Heart left ventricle (tissue), 16 donors: ENCODE measurements at regions of chr7 and their contacts with region 1.

Region 1: GRCh38 chr7:107972075-107972482 is 30.9 kb downstream of the LAMB1 start:
- DNase-seq: peak in 2 of 5 donors; percentile 38 to 62
- ATAC-seq: peak; percentile 78 to 90 (median 85)
- H3K4me3 ChIP-seq: no peak overlapping the region
- H3K27ac ChIP-seq: peak overlapping the region; percentile 37 to 92 (median 72)
- H3K4me1 ChIP-seq: peaks cover 0 to 74% (median 52%) of the 10 kb centered on the region in 12 donors
- H3K27me3 ChIP-seq: no peaks in the 10 kb centered on the region
- CTCF ChIP-seq: no peak
- POLR2A ChIP-seq: no peak

Region 2: GRCh38 chr7:107907790-107908189 is 64.3 kb before region 1 on chr7:
- intact Hi-C with region 1: no loop called
- DNase-seq: no peak
- ATAC-seq: peak in 3 of 4 donors; percentile 24 to 68 (median 61)
- H3K4me3 ChIP-seq: no peak overlapping the region
- H3K27ac ChIP-seq: peak overlapping the region in 2 of 12 donors; percentile 2 to 39
- H3K4me1 ChIP-seq: peaks cover 0 to 26% (median 8%) of the 10 kb centered on the region in 12 donors
- H3K27me3 ChIP-seq: no peaks in the 10 kb centered on the region
- CTCF ChIP-seq: no peak
- POLR2A ChIP-seq: no peak

Region 3: DNA sequence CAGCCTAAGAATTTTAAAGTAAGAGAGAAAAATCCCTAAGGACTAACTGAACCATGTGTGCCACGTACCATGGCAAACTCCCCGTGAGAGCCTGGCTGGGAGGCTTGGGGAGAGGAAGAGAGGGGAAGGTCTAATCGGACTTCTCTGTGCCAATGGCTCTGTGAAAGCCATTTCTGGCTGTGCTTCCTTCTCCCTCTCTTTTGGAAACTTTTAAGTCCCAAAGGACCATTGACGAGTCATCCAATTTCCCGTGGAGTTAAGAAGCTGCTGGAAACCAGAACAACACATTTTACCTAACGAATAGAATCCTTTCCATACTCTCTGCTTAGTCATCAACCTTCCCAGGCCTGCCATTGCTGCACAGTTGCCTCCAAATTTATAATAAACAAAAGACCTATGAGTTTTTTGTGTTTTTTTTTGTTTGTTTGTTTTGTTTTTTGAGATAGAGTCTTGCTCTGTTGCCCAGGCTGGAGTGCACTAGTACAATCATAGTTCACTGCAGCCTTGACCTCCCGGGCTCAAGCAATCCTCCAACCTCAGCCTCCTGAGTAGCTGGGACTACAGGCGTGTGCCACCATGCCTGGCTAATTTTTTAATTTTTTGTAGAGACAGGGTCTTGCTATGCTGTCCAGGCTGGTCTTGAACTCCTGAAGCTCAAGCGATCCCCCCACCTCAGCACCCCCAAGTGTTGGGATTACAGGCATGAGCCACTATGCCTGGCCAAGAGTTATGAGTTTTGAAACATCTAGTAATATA is 17.7 kb after region 1 on chr7:
- intact Hi-C with region 1: loop called in 2 of 10 experiments (anchors 2 kb)
- DNase-seq: peak in 3 of 5 donors; percentile 40 to 54 (median 40)
- ATAC-seq: peak; percentile 49 to 77 (median 74)
- H3K4me3 ChIP-seq: no peak overlapping the region
- H3K27ac ChIP-seq: peak overlapping the region; percentile 39 to 77 (median 51)
- H3K4me1 ChIP-seq: peaks cover 0 to 56% (median 22%) of the 10 kb centered on the region in 12 donors
- H3K27me3 ChIP-seq: no peaks in the 10 kb centered on the region
- CTCF ChIP-seq: no peak
- POLR2A ChIP-seq: no peak

Region 4: GRCh38 chr7:107995184-107996071 is 23.3 kb after region 1 on chr7:
- intact Hi-C with region 1: loop called in 2 of 10 experiments (anchors 2 to 5 kb)
- DNase-seq: peak in 4 of 5 donors; percentile 54 to 67 (median 59)
- ATAC-seq: peak; percentile 62 to 72 (median 70)
- H3K4me3 ChIP-seq: no peak overlapping the region
- H3K27ac ChIP-seq: peak overlapping the region; percentile 49 to 79 (median 63)
- H3K4me1 ChIP-seq: peaks cover 0 to 80% (median 44%) of the 10 kb centered on the region in 12 donors
- H3K27me3 ChIP-seq: no peaks in the 10 kb centered on the region
- CTCF ChIP-seq: no peak
- POLR2A ChIP-seq: no peak